Natural killer cell (primary cell): ENCODE measurements at regions of chr7 and their contacts with region 1.

Region 1: GRCh38 chr7:155685070-155685790 is 40.8 kb downstream of the RBM33 start:
- DNase-seq: peak in 1 of 2 donors; percentile 44
- ATAC-seq: peak; percentile 43 to 75 (median 72)
- H3K4me3 ChIP-seq: no peak overlapping the region
- H3K4me3 Mint-ChIP-seq: peak overlapping the region; percentile 22
- H3K27ac ChIP-seq: peak overlapping the region; percentile 5
- H3K27ac Mint-ChIP-seq: peak overlapping the region; percentile 85 to 86
- H3K4me1 ChIP-seq: peaks cover 3% of the 10 kb centered on the region
- H3K4me1 Mint-ChIP-seq: peaks cover 72 to 80% of the 10 kb centered on the region in 2 donors
- H3K27me3 ChIP-seq: no peaks in the 10 kb centered on the region
- H3K27me3 Mint-ChIP-seq: no peaks in the 10 kb centered on the region
- CTCF ChIP-seq: no peak

Region 2: DNA sequence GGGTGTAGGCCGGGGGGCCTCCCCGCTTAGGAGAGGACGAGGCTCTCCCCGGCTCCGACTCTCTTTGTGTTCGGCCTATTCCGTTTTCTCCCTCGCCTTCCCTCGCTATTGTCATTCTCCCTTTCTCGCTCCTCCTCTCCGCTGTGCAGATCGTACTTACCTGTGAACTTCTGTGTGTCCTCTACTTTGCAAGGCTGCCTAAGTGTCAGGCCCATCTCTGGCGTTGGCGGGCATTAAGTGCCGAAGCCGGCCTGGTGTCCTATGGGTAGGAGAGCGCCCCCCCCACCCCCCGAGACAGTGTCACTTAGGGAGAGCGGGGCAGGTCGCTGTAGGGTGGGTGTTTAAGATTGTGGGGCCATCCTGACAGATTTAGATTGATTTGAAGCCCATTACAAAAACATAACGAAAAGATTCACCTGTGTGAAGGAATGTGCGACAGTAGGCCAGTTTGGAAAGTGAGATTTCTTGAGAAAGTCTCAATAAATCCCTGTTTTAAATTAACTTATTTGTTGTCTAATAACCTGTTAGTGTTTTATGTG is 40.2 kb before region 1 on chr7:
- intact Hi-C with region 1: loop called (anchors 5 kb)
- DNase-seq: peak in 1 of 2 donors; percentile 64
- ATAC-seq: peak; percentile 36 to 64 (median 51)
- H3K4me3 ChIP-seq: peak overlapping the region; percentile 93
- H3K4me3 Mint-ChIP-seq: peak overlapping the region; percentile 98
- H3K27ac ChIP-seq: peak overlapping the region; percentile 89
- H3K27ac Mint-ChIP-seq: peak overlapping the region; percentile 90 to 94
- H3K4me1 ChIP-seq: peaks cover 16% of the 10 kb centered on the region
- H3K4me1 Mint-ChIP-seq: peaks cover 56 to 60% of the 10 kb centered on the region in 2 donors
- H3K27me3 ChIP-seq: no peaks in the 10 kb centered on the region
- H3K27me3 Mint-ChIP-seq: no peaks in the 10 kb centered on the region
- CTCF ChIP-seq: no peak